ENCODE measurements at regions of chr4 and their contacts with region 1.

Region 1: GRCh38 chr4:2468445-2469192 is at the start of gene RNF4:
- DNase-seq: peak; percentile 95 to 97
- ATAC-seq: peak; percentile 94 to 98 (median 96)
- H3K4me3 ChIP-seq: peak within 1 kb of the TSS; percentile 61 to 100 (median 94)
- H3K27ac ChIP-seq: peak within 1 kb of the TSS; percentile 78 to 99 (median 97)
- H3K4me1 ChIP-seq: peaks cover 4 to 39% (median 30%) of the 10 kb centered on the region in 9 donors
- H3K27me3 ChIP-seq: no peaks in the 10 kb centered on the region
- CTCF ChIP-seq: no peak
- total RNA-seq, gene RNF4: 27.4 to 42.1 (median 30.6) TPM

Region 2: DNA sequence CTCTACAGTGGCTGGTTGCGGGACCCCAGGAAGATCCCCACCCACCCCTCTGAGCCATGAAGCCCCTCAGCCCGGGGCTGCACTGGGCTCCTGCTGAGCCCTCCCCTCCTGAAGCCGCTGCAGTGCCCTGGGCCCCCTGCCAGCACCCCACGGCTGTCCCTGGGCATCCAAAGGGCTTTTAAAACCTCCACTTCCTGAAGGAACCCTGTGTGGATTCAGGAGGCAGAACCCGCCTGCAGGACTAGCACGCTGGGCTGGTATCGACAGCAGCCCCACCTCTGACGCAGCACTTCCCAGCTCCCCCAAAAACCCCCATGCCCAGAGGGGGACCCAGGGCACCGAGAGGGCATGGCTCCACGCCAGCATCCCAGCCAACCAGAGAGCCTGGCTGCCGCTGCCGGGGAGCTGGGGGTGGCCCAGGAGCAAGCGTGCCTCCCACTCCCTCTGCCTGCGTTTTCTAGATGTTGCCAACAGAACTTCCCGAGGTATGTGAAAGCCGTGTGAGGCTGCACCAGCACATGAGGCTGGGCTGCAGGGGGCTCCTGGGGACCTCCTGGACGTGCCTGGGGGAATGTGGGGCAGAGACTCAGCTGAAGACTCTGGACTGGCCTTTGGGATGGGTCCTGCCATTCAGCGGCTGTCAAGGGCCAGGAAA is 213.0 kb before region 1 on chr4:
- intact Hi-C with region 1: loop called in 1 of 10 experiments (anchors 5 kb)
- DNase-seq: peak; percentile 24 to 56
- ATAC-seq: peak in 7 of 8 donors; percentile 4 to 43 (median 29)
- H3K4me3 ChIP-seq: peak overlapping the region in 6 of 10 donors; percentile 3 to 30 (median 15)
- H3K27ac ChIP-seq: peak overlapping the region; percentile 72 to 94 (median 91)
- H3K4me1 ChIP-seq: peaks cover 56 to 78% (median 71%) of the 10 kb centered on the region in 9 donors
- H3K27me3 ChIP-seq: no peaks in the 10 kb centered on the region
- CTCF ChIP-seq: no peak

Region 3: DNA sequence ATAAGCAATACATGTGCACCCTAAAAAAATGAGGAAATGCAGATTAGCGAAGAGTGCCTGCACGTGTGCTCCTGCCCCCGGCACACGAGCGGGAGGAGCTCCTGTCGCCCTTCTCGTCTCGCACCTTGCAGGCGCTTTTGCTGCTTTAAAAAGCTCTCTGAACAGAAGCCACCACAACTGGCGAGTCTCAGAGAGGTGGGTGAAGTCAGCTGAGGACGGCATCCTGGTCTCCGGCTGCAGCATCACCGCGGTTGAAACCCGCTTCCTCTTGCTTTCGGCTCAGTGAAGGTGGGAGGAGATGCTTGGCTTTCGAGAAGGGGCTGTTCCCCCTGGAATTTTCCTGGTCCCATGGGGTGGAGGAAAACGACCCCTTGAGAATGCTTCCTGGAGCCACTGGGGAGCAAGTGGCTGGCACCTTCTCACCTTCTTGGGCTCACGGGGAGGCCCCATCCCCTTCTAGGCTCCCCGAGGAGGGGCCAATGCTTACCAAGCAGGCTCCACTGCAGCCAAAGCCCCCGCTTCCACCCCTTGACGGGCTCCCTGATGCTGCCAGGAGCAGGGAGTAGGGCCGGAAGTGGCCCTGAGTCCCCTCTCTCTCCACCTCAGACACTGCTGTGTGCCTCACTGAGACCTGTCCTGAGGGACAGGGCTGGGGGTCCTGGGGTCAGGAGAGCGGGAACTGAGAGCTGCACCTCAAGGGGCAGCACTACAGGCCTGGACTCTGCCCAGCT is 177.5 kb before region 1 on chr4:
- intact Hi-C with region 1: no loop called
- DNase-seq: no peak
- ATAC-seq: no peak
- H3K4me3 ChIP-seq: no peak overlapping the region
- H3K27ac ChIP-seq: no peak overlapping the region
- H3K4me1 ChIP-seq: peaks cover 0 to 13% (median 0%) of the 10 kb centered on the region in 9 donors
- H3K27me3 ChIP-seq: no peaks in the 10 kb centered on the region
- CTCF ChIP-seq: no peak

Region 4: GRCh38 chr4:2484993-2485392 is 16.4 kb after region 1 on chr4:
- intact Hi-C with region 1: loop called in 1 of 10 experiments (anchors 2 kb)
- DNase-seq: peak; percentile 75 to 85
- ATAC-seq: peak; percentile 74 to 92 (median 88)
- H3K4me3 ChIP-seq: peak overlapping the region in 7 of 10 donors; percentile 5 to 19 (median 10)
- H3K27ac ChIP-seq: peak overlapping the region; percentile 7 to 83 (median 74)
- H3K4me1 ChIP-seq: peaks cover 34 to 100% (median 91%) of the 10 kb centered on the region in 9 donors
- H3K27me3 ChIP-seq: no peaks in the 10 kb centered on the region
- CTCF ChIP-seq: no peak

Region 5: DNA sequence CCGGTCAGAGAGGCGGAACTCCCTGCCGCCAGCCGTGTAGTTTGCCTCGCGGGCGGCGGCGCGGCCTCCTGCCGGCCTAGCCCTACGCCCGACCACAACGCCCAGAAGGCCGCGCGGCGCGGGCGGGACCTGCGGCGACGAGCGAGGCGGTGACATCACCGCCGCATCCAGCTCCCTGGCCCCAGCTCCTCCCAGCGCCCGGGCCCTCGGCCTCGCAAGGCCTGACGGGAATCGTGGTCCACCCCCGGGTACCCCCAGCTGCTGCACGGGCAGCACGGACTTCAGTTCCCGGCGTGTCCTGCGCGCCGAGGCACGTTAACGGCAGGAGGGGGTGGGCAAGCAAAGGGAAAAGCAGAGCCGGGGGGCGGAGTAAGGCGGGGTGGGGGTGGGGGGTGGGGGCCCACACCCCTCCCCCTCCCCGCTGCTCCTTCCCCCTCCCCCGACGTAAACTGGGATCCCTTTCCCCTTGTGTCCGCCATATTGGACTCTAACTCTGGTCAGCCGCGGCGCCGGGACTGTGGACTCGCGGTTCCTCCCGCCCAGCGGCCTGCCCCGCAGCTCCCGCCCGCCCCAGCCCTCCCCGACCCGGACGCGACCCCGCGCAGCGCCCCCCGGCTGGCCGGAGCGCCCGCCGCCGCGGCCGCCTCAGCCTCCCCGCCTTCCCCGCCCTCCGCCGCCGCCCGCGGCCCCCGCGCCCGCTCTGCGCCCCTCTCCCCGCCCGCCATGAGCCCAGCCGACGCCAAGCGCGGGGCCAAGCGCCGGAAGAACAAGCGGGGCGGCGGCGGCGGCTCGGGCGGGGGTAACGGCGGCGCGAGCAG is 67.8 kb after region 1 on chr4 and contains the start of gene FAM193A:
- intact Hi-C with region 1: loop called in 5 of 10 experiments (anchors 1 to 5 kb)
- DNase-seq: peak; percentile 99
- ATAC-seq: peak; percentile 97 to 99 (median 98)
- H3K4me3 ChIP-seq: peak within 1 kb of the TSS; percentile 82 to 98 (median 96)
- H3K27ac ChIP-seq: peak within 1 kb of the TSS; percentile 87 to 98 (median 98)
- H3K4me1 ChIP-seq: peaks cover 10 to 39% (median 32%) of the 10 kb centered on the region in 9 donors
- H3K27me3 ChIP-seq: no peaks in the 10 kb centered on the region
- CTCF ChIP-seq: no peak
- total RNA-seq, gene FAM193A: 12.6 to 20.6 (median 16.3) TPM

Measured in heart right ventricle (tissue), 16 donors.